IMR-90 (cell line): ENCODE measurements at regions of chr3 and their contacts with region 1.

Region 1: DNA sequence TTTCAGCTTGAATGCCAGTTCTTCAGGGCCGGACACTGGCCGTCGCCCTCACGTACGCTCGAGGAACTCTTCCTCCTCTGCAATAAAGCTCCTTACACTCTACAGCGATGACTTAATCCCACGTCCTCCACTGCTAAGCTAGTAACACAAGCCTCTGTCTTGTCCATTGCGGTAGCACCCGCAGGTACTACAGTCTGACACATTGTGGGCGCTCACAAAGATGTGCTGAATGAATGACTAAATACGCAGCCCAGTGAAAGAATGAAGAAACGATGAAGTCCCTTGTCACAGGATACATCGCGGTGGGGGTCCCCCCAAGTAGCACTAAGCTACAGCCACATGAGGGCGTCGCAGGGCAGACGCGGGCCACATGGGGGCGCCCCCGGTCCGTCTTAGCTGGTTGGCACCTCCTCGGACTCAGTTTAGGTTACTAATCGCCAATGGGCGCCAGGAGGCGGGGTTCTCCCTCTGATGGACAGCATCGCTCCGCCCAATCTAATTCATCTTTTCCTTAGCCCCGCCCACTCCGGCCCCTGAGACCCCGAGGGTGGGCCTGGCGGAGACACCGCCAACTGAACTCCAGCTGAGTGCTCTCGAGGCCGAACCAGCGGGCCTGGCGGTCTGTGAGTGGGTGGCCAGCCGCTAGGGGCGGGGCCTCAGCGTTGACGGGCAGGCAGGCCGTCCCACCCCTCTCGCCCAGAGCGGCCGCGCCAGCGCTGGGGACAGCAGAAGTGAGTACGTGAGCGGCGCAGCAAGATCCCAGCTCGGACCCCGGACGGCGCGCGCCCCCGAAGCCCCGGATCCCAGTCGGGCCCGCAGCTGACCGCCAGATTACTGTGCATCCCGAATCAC is at the start of gene EPHB3:
- DNase-seq: peak; percentile 99
- ATAC-seq: peak; percentile 92
- H3K4me3 ChIP-seq: peak within 1 kb of the TSS; percentile 50
- H3K27ac ChIP-seq: peak within 1 kb of the TSS; percentile 3
- H3K4me1 ChIP-seq: peaks cover 20% of the 10 kb centered on the region
- H3K27me3 ChIP-seq: peaks cover 34% of the 10 kb centered on the region
- CTCF ChIP-seq: peak; percentile 100
- POLR2A ChIP-seq: peak; percentile 83
- RAD21 ChIP-seq: peak; percentile 100
- total RNA-seq, gene EPHB3: 0.72 and 0.83 TPM in 2 replicates

Region 2: DNA sequence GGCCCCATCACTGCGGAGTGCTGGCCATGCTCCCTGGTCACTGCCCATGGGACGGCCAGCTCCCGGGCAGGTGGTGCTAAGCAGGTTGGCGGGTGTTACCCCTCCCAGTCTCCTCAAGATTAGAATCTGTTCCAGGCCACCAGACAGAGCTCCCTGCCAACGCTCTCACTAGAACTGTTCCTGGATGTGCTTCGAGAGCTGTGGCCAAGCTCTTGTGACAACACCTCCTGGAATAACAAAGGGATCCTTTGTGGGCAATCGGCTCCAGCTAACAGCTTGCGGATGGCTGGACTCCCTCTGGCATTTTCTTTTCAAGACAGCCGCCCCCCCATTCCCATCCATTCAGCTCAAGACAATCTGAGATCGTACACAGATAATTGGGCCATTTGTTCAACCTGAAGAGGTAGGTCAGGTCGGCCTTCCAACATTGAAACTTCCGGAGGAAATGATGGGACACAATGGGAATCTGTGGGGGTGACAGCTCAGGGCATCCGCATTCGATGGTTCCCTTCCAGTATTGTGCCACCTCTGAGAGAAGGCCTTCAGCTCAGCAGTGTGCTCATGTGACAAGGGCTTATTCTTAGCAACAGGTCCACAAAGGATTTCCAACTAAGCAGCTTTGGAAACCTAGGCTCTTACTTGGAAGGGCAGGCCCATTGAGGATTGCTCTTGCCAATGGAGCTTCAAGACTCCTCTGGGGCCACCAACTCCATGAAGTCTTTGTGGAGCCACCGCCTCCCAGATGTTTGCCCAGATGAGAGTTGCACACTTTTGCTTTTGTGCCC is 11.3 kb before region 1 on chr3:
- CTCF ChIA-PET with region 1: interaction called, 18 read pairs
- POLR2A ChIA-PET with region 1: no interaction called
- dilution Hi-C with region 1: no loop called
- in situ Hi-C with region 1: no loop called
- intact Hi-C with region 1: no loop called
- DNase-seq: no peak
- ATAC-seq: no peak
- H3K4me3 ChIP-seq: no peak overlapping the region
- H3K27ac ChIP-seq: no peak overlapping the region
- H3K4me1 ChIP-seq: no peaks in the 10 kb centered on the region
- H3K27me3 ChIP-seq: peaks cover 67% of the 10 kb centered on the region
- CTCF ChIP-seq: no peak
- POLR2A ChIP-seq: no peak
- RAD21 ChIP-seq: no peak

Region 3: DNA sequence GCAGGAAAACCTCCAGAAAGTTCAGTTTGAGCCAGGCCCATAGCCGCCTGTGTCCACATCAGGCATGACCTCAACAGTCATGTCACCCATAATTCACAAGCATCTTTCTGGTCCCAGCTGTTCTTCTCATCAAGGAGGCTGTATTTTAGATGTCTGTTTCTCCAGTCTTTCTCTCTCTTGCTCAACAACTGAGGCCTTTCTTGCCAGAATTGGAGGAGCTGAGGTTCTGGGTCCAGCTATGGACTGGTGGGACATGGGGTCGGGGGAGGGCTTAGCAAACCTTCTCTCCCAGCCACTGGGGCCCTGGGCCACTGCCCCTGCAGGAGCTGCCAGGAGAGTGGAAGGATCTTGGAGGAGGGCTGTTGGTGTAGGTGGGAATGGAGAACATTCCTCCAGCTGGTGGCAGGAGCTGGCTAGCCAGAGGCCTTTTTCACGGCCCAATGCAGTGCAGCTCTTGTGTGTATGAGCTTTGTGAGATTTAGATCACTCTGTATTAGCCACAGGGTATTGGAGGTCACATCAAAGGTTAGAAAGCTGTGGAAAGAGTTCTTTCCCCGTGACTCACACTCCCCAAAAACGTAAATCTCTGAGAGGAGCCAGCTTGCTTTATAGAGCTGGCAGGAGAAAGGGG is 127.1 kb after region 1 on chr3:
- CTCF ChIA-PET with region 1: interaction called, 15 read pairs
- POLR2A ChIA-PET with region 1: no interaction called
- dilution Hi-C with region 1: no loop called
- in situ Hi-C with region 1: no loop called
- intact Hi-C with region 1: no loop called
- DNase-seq: peak; percentile 91
- ATAC-seq: peak; percentile 85
- H3K4me3 ChIP-seq: no peak overlapping the region
- H3K27ac ChIP-seq: peak overlapping the region; percentile 98
- H3K4me1 ChIP-seq: peaks cover 44% of the 10 kb centered on the region
- H3K27me3 ChIP-seq: peaks cover 11% of the 10 kb centered on the region
- CTCF ChIP-seq: peak; percentile 20; the same call in 1 of the 2 replicates
- POLR2A ChIP-seq: no peak
- RAD21 ChIP-seq: peak; percentile 22; the same call in 1 of the 2 replicates

Region 4: GRCh38 chr3:184727357-184728009 is 166.2 kb after region 1 on chr3:
- CTCF ChIA-PET with region 1: interaction called, 22 read pairs
- POLR2A ChIA-PET with region 1: no interaction called
- dilution Hi-C with region 1: no loop called
- in situ Hi-C with region 1: no loop called
- intact Hi-C with region 1: loop called (anchors 1 kb)
- DNase-seq: peak; percentile 72
- ATAC-seq: peak; percentile 95
- H3K4me3 ChIP-seq: no peak overlapping the region
- H3K27ac ChIP-seq: no peak overlapping the region
- H3K4me1 ChIP-seq: peaks cover 3% of the 10 kb centered on the region; the same call in 1 of the 2 replicates
- H3K27me3 ChIP-seq: peaks cover 8% of the 10 kb centered on the region
- CTCF ChIP-seq: peak; percentile 70
- POLR2A ChIP-seq: no peak
- RAD21 ChIP-seq: peak; percentile 67

Region 5: GRCh38 chr3:184777336-184778004 is 216.2 kb after region 1 on chr3:
- CTCF ChIA-PET with region 1: interaction called, 11 read pairs
- POLR2A ChIA-PET with region 1: interaction called, 10 read pairs
- dilution Hi-C with region 1: no loop called
- in situ Hi-C with region 1: no loop called
- intact Hi-C with region 1: loop called (anchors 1 kb)
- DNase-seq: peak; percentile 97
- ATAC-seq: peak; percentile 95
- H3K4me3 ChIP-seq: no peak overlapping the region
- H3K27ac ChIP-seq: no peak overlapping the region
- H3K4me1 ChIP-seq: peaks cover 10% of the 10 kb centered on the region
- H3K27me3 ChIP-seq: no peaks in the 10 kb centered on the region
- CTCF ChIP-seq: peak; percentile 95
- POLR2A ChIP-seq: no peak
- RAD21 ChIP-seq: peak; percentile 98

Region 6: DNA sequence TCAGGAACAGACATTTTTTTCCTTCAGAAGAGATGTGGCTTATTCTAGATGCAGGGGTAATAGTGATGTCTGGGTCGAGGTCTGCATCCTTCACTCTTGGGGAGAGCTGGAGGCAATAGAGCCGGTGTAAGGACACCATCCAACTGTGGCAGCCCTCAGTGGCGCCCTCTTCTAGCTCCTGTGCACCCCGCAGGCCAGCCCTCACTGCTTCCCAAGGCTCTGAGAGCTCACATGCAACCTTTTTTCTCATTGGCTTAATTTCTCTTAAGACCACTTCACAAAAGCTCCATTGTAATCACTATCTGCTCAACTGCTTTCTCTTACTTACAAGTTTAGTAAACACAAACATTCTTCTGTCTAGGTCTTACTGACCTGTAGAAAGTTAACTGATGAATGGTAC is 246.7 kb after region 1 on chr3:
- CTCF ChIA-PET with region 1: interaction called, 6 read pairs
- POLR2A ChIA-PET with region 1: no interaction called
- dilution Hi-C with region 1: no loop called
- in situ Hi-C with region 1: no loop called
- intact Hi-C with region 1: loop called (anchors 1 kb)
- DNase-seq: no peak
- ATAC-seq: no peak
- H3K4me3 ChIP-seq: no peak overlapping the region
- H3K27ac ChIP-seq: no peak overlapping the region
- H3K4me1 ChIP-seq: peaks cover 4% of the 10 kb centered on the region
- H3K27me3 ChIP-seq: no peaks in the 10 kb centered on the region
- CTCF ChIP-seq: 0 out of 2 replicates have a peak, but pooled peaks have one; percentile 23
- POLR2A ChIP-seq: no peak
- RAD21 ChIP-seq: no peak